Activated B cell treated with CpG ODN at 0.5 μM for 24 hours (primary cell): ENCODE measurements at regions of chr13 and their contacts with region 1.

Region 1: GRCh38 chr13:110715395-110716235 is 2.1 kb downstream of the ING1 start:
- DNase-seq: peak; percentile 88
- ATAC-seq: peak; percentile 62
- H3K4me3 Mint-ChIP-seq: peak overlapping the region; percentile 96
- H3K27ac Mint-ChIP-seq: peak overlapping the region; percentile 97
- H3K4me1 Mint-ChIP-seq: peaks cover 39% of the 10 kb centered on the region
- H3K27me3 Mint-ChIP-seq: no peaks in the 10 kb centered on the region
- CTCF ChIP-seq: no peak

Region 2: DNA sequence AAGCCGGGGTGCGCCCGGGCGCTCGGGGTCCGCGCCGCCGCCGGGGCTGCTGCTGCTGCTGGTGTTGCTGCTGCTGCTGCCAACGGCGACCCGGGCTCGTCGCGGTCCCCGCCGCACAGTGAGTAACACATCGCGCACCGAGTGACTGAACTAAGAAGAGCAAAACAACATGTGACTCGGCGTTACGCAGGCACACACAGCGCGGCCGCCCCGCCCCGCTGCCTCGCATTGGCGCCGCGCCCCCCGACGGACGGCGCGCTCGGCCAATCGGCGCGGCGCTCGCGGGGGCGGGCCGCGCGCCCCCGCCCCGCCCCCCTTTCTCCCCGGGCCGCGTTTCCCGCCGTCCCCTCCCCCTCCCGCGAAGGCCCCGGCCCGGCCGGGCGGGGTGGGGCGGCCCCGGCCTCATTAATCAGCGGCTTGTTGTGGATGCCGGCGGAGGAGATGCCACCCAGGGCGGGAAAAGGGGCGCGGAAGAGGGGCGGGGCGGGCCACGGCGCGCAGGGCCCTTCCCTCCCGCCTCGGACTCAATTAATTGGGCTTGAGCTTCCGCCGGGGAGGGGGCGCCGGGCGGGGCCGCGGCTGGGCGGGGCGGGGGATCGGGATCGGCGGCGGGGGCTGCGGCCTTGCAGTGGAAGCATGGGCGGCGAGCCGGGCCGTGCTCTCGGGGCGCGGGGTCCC is 929.0 kb before region 1 on chr13 and contains the start of gene IRS2:
- CTCF ChIA-PET with region 1: no interaction called
- POLR2A ChIA-PET with region 1: no interaction called
- intact Hi-C with region 1: loop called (anchors 10 kb)
- DNase-seq: peak; percentile 84
- ATAC-seq: peak; percentile 88
- H3K4me3 Mint-ChIP-seq: peak within 1 kb of the TSS; percentile 86
- H3K27ac Mint-ChIP-seq: peak within 1 kb of the TSS; percentile 56
- H3K4me1 Mint-ChIP-seq: peaks cover under 1% of the 10 kb centered on the region
- H3K27me3 Mint-ChIP-seq: peaks cover 4% of the 10 kb centered on the region
- CTCF ChIP-seq: no peak
- total RNA-seq, gene IRS2: 4.2 and 4.4 TPM in 2 replicates

Region 3: GRCh38 chr13:110561344-110562035 is 154.1 kb before region 1 on chr13 and contains the start of gene RAB20:
- CTCF ChIA-PET with region 1: no interaction called
- POLR2A ChIA-PET with region 1: interaction called, 11 read pairs
- intact Hi-C with region 1: loop called (anchors 1 kb)
- DNase-seq: peak; percentile 57
- ATAC-seq: peak; percentile 74
- H3K4me3 Mint-ChIP-seq: peak within 1 kb of the TSS; percentile 96
- H3K27ac Mint-ChIP-seq: peak within 1 kb of the TSS; percentile 84
- H3K4me1 Mint-ChIP-seq: peaks cover 28% of the 10 kb centered on the region
- H3K27me3 Mint-ChIP-seq: peaks cover 5% of the 10 kb centered on the region
- CTCF ChIP-seq: no peak
- total RNA-seq, gene RAB20: 2.7 and 3.1 TPM in 2 replicates

Region 4: GRCh38 chr13:110652231-110652730 is 63.3 kb before region 1 on chr13:
- CTCF ChIA-PET with region 1: no interaction called
- POLR2A ChIA-PET with region 1: interaction called, 19 read pairs
- intact Hi-C with region 1: loop called (anchors 5 kb)
- DNase-seq: no peak
- ATAC-seq: peak; percentile 65
- H3K4me3 Mint-ChIP-seq: peak overlapping the region; percentile 64
- H3K27ac Mint-ChIP-seq: peak overlapping the region; percentile 76
- H3K4me1 Mint-ChIP-seq: peaks cover 71% of the 10 kb centered on the region
- H3K27me3 Mint-ChIP-seq: no peaks in the 10 kb centered on the region
- CTCF ChIP-seq: no peak

Region 5: DNA sequence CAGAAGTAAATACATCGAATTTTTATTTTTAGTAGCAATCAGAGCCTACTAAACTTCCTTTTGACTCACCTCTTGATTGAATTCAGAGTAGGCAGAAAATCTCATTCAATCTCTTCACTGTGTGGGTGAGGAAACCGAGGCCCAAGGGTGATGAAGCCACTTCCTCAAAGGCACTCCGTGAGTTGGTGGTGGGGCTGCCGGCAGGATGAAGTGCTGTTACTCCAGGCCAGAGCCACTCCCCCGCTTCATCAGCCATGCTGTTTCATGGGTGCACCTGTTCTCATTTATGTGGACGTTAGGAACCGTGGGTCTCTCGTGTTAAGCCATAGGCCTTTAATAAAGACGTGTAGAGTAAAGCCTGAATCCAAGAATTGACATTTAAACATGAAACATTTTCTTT is 11.1 kb after region 1 on chr13:
- CTCF ChIA-PET with region 1: no interaction called
- POLR2A ChIA-PET with region 1: interaction called, 13 read pairs
- intact Hi-C with region 1: loop called (anchors 1 kb)
- DNase-seq: no peak
- ATAC-seq: peak; percentile 71
- H3K4me3 Mint-ChIP-seq: peak overlapping the region; percentile 4
- H3K27ac Mint-ChIP-seq: peak overlapping the region; percentile 76
- H3K4me1 Mint-ChIP-seq: peaks cover 30% of the 10 kb centered on the region
- H3K27me3 Mint-ChIP-seq: no peaks in the 10 kb centered on the region
- CTCF ChIP-seq: no peak

Region 6: DNA sequence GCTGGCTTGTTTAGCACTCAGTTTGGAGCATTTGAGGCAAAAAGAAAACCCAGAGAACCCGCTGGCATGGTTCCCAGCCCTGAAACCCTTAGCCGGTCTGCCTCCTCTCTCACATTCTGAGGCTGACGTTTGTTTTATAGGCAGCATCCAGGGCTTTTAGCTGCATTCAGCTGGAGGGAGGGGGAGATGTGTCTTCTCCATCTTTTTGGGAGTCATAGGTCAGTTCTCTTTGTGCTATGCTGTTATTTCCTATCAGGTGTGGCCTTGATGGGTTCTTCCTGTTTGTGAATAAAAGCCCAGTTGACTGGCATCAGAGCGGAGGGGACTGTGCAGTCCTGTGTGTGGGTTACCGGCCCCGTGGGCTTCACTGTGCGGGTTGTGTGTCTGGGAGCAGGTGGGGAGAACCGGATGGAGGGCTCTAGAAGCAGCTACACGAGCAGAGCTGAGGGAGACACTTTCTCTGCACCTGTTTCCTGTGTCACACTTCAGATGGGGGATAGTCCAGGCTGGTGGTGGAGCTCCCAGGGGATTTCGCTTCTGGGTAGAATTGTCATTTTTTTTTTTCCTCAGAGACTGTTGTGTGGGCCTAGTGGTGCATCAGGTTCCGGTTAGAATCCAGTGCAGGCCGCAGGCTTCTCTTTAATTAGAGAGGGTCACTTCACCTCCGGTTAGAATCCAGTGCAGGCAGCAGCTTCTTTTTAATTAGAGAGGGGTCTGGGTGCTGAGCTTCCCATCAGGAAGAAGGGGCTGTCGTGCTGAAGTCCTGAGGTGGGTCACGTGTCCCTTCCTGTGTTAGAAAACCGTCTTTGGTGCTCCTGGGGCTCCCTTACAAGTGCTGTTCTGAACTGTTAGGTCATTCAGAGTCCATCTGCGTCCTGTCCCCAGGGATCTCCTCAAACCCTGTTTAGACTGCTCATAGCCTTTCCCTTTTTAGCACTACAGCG is 469.1 kb after region 1 on chr13:
- CTCF ChIA-PET with region 1: no interaction called
- POLR2A ChIA-PET with region 1: interaction called, 5 read pairs
- intact Hi-C with region 1: loop called (anchors 1 kb)
- DNase-seq: peak; percentile 60
- ATAC-seq: peak; percentile 89
- H3K4me3 Mint-ChIP-seq: peak overlapping the region; percentile 80
- H3K27ac Mint-ChIP-seq: peak overlapping the region; percentile 94
- H3K4me1 Mint-ChIP-seq: peaks cover 99% of the 10 kb centered on the region
- H3K27me3 Mint-ChIP-seq: no peaks in the 10 kb centered on the region
- CTCF ChIP-seq: no peak